ENCODE measurements at regions of chr16 and their contacts with region 1.

Region 1: GRCh38 chr16:84062734-84063640 is 20.4 kb upstream of the SLC38A8 start:
- DNase-seq: peak; percentile 91

Region 2: GRCh38 chr16:83826146-83826913 is 236.7 kb before region 1 on chr16:
- intact Hi-C with region 1: loop called (anchors 5 kb)
- DNase-seq: peak; percentile 92

Region 3: DNA sequence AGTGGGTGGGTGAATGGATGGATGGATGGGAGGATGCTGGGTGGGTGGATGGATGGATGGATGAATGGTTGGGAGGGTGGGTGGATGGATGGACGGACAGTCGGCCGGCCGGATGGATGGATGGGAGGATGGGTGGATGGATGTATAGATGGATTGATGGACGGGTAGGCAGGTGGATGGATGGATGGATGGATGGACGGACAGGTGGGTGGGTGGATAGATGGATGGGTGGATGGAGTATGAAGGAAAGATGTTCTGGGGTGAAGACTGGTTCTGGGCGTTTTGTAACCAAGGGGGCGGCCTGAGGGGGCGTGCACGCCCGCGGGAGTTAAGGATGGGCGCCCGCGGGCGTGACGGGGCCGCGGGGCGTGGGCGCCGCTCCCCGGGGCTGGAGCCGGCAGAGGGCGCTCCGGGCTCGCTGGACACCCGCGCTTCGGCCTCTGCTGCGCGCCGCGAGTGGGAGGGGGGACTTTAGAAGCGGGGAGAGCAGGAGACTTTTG is 95.1 kb before region 1 on chr16 and contains the start of gene NECAB2:
- intact Hi-C with region 1: loop called (anchors 2 kb)
- DNase-seq: peak; percentile 87
- total RNA-seq, gene NECAB2: 2.5 TPM

Measured in cardiac septum (tissue), 1 donor.